Naive thymus-derived CD4-positive, alpha-beta T cell (primary cell): ENCODE measurements at regions of chr7 and their contacts with region 1.

Region 1: GRCh38 chr7:55593515-55594318 is 21.4 kb upstream of the VOPP1 start:
- DNase-seq: peak in 7 of 9 donors; percentile 40 to 79 (median 60)
- ATAC-seq: peak; percentile 60
- H3K4me3 ChIP-seq: no peak overlapping the region
- H3K4me3 Mint-ChIP-seq: no peak overlapping the region
- H3K27ac ChIP-seq: no peak overlapping the region
- H3K27ac Mint-ChIP-seq: no peak overlapping the region
- H3K4me1 ChIP-seq: peaks cover 0 to 4% of the 10 kb centered on the region in 2 donors
- H3K4me1 Mint-ChIP-seq: peaks cover 4 to 24% (median 11%) of the 10 kb centered on the region in 7 donors
- H3K27me3 ChIP-seq: no peaks in the 10 kb centered on the region
- H3K27me3 Mint-ChIP-seq: peaks cover 0 to 5% (median 2%) of the 10 kb centered on the region in 5 donors

Region 2: DNA sequence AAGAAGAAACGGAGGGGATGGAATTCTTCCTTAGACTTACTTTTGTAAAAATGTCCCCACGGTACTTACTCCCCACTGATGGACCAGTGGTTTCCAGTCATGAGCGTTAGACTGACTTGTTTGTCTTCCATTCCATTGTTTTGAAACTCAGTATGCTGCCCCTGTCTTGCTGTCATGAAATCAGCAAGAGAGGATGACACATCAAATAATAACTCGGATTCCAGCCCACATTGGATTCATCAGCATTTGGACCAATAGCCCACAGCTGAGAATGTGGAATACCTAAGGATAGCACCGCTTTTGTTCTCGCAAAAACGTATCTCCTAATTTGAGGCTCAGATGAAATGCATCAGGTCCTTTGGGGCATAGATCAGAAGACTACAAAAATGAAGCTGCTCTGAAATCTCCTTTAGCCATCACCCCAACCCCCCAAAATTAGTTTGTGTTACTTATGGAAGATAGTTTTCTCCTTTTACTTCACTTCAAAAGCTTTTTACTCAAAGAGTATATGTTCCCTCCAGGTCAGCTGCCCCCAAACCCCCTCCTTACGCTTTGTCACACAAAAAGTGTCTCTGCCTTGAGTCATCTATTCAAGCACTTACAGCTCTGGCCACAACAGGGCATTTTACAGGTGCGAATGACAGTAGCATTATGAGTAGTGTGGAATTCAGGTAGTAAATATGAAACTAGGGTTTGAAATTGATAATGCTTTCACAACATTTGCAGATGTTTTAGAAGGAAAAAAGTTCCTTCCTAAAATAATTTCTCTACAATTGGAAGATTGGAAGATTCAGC is 387.3 kb before region 1 on chr7:
- CTCF ChIA-PET with region 1: no interaction called
- POLR2A ChIA-PET with region 1: no interaction called
- intact Hi-C with region 1: no loop called
- DNase-seq: no peak
- ATAC-seq: no peak
- H3K4me3 ChIP-seq: no peak overlapping the region
- H3K4me3 Mint-ChIP-seq: no peak overlapping the region
- H3K27ac ChIP-seq: no peak overlapping the region
- H3K27ac Mint-ChIP-seq: no peak overlapping the region
- H3K4me1 ChIP-seq: no peaks in the 10 kb centered on the region
- H3K4me1 Mint-ChIP-seq: no peaks in the 10 kb centered on the region
- H3K27me3 ChIP-seq: no peaks in the 10 kb centered on the region
- H3K27me3 Mint-ChIP-seq: peaks cover 0 to 4% (median 0%) of the 10 kb centered on the region in 5 donors

Region 3: DNA sequence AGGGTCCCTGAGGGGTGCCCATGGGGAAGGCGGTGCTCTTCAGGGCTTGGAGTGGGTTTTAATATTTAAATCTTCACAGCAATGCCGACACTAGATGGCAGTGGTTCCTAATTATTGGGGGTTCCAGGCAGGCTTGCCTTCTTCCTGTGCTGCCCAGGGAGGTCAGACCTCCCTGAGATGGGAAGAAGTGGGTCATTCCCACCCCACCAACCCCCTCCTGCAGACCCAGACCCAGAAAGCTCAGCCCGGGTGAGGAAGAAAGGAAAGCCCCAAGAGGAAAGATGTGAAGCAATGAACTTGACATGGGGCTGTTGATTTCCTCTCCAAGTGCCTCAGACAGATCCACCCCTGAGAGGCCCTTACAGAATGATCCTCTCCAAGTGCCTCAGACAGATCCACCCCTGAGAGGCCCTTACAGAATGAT is 313.7 kb before region 1 on chr7:
- CTCF ChIA-PET with region 1: no interaction called
- POLR2A ChIA-PET with region 1: no interaction called
- intact Hi-C with region 1: loop called (anchors 1 kb)
- DNase-seq: peak in 8 of 9 donors; percentile 15 to 59 (median 44)
- ATAC-seq: peak; percentile 73
- H3K4me3 ChIP-seq: no peak overlapping the region
- H3K4me3 Mint-ChIP-seq: no peak overlapping the region
- H3K27ac ChIP-seq: no peak overlapping the region
- H3K27ac Mint-ChIP-seq: peak overlapping the region in 1 of 9 donors; percentile 52
- H3K4me1 ChIP-seq: no peaks in the 10 kb centered on the region
- H3K4me1 Mint-ChIP-seq: peaks cover 0 to 2% (median 0%) of the 10 kb centered on the region in 7 donors
- H3K27me3 ChIP-seq: no peaks in the 10 kb centered on the region
- H3K27me3 Mint-ChIP-seq: peaks cover 5 to 12% (median 8%) of the 10 kb centered on the region in 5 donors

Region 4: GRCh38 chr7:55432939-55433784 is 160.6 kb before region 1 on chr7:
- CTCF ChIA-PET with region 1: interaction called, 29 read pairs
- POLR2A ChIA-PET with region 1: interaction called, 5 read pairs
- intact Hi-C with region 1: loop called (anchors 1 kb)
- DNase-seq: peak in 5 of 9 donors; percentile 44 to 54 (median 48)
- ATAC-seq: peak; percentile 61
- H3K4me3 ChIP-seq: no peak overlapping the region
- H3K4me3 Mint-ChIP-seq: peak overlapping the region in 1 of 10 donors; percentile 19
- H3K27ac ChIP-seq: no peak overlapping the region
- H3K27ac Mint-ChIP-seq: peak overlapping the region in 5 of 9 donors; percentile 7 to 76 (median 67)
- H3K4me1 ChIP-seq: peaks cover 0 to 29% of the 10 kb centered on the region in 2 donors
- H3K4me1 Mint-ChIP-seq: peaks cover 17 to 46% (median 40%) of the 10 kb centered on the region in 7 donors
- H3K27me3 ChIP-seq: no peaks in the 10 kb centered on the region
- H3K27me3 Mint-ChIP-seq: no peaks in the 10 kb centered on the region

Region 5: DNA sequence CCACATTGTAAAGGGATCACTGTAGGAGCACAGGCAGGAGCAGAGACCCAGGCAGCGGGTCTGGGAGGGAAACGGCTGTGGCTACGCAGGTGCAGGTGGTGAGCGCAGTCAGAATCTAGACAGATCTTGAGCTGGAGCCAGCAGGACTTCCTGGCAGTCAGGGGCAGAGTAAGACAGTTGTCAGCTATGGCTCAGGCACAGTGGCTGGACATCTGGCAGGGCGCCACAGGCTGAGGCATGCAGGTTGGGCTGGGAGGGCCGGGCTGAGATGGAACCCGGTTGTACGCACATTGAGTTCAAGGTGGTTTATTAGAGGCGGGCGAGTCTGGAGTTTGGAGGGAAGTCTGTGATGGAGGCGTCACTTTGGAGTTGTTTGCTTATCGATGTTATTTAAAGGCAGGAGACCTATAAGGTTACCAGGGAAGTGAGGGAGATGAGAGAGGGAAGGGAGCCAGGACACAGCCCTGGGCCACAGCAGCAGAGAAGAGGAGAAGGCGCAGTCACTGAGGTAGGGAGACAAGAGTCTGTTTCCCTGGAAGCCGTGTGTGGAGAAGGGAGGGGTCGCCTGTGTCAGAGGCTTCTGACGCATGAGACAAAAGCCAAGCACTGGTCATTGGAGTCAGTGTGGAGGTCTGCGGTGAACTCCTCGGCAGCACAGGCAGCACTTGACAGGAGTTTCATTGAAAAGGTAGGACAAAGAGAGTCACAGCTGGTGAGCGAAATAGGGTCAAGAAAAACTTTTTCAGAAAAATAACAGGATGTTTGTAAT is 154.8 kb before region 1 on chr7:
- CTCF ChIA-PET with region 1: interaction called, 29 read pairs
- POLR2A ChIA-PET with region 1: interaction called, 5 read pairs
- intact Hi-C with region 1: loop called in 1 of 2 experiments (anchors 1 kb)
- DNase-seq: peak in 1 of 9 donors; percentile 19
- ATAC-seq: no peak
- H3K4me3 ChIP-seq: no peak overlapping the region
- H3K4me3 Mint-ChIP-seq: peak overlapping the region in 8 of 10 donors; percentile 11 to 71 (median 52)
- H3K27ac ChIP-seq: no peak overlapping the region
- H3K27ac Mint-ChIP-seq: peak overlapping the region; percentile 10 to 92 (median 45)
- H3K4me1 ChIP-seq: peaks cover 0 to 44% of the 10 kb centered on the region in 2 donors
- H3K4me1 Mint-ChIP-seq: peaks cover 30 to 59% (median 51%) of the 10 kb centered on the region in 7 donors
- H3K27me3 ChIP-seq: no peaks in the 10 kb centered on the region
- H3K27me3 Mint-ChIP-seq: no peaks in the 10 kb centered on the region

Region 6: GRCh38 chr7:55469271-55469681 is 124.4 kb before region 1 on chr7:
- CTCF ChIA-PET with region 1: interaction called, 5 read pairs
- POLR2A ChIA-PET with region 1: interaction called, 3 read pairs
- intact Hi-C with region 1: loop called in 1 of 2 experiments (anchors 2 kb)
- DNase-seq: peak in 7 of 9 donors; percentile 57 to 85 (median 76)
- ATAC-seq: peak; percentile 86
- H3K4me3 ChIP-seq: peak overlapping the region; percentile 21
- H3K4me3 Mint-ChIP-seq: peak overlapping the region; percentile 33 to 75 (median 68)
- H3K27ac ChIP-seq: peak overlapping the region; percentile 70
- H3K27ac Mint-ChIP-seq: peak overlapping the region; percentile 85 to 97 (median 93)
- H3K4me1 ChIP-seq: peaks cover 31 to 76% of the 10 kb centered on the region in 2 donors
- H3K4me1 Mint-ChIP-seq: peaks cover 25 to 86% (median 74%) of the 10 kb centered on the region in 7 donors
- H3K27me3 ChIP-seq: no peaks in the 10 kb centered on the region
- H3K27me3 Mint-ChIP-seq: no peaks in the 10 kb centered on the region

Region 7: GRCh38 chr7:55477781-55478374 is 115.8 kb before region 1 on chr7:
- CTCF ChIA-PET with region 1: no interaction called
- POLR2A ChIA-PET with region 1: no interaction called
- intact Hi-C with region 1: loop called in 1 of 2 experiments (anchors 1 kb)
- DNase-seq: no peak
- ATAC-seq: no peak
- H3K4me3 ChIP-seq: no peak overlapping the region
- H3K4me3 Mint-ChIP-seq: peak overlapping the region in 7 of 10 donors; percentile 0 to 79 (median 66)
- H3K27ac ChIP-seq: peak overlapping the region; percentile 61
- H3K27ac Mint-ChIP-seq: peak overlapping the region; percentile 35 to 95 (median 92)
- H3K4me1 ChIP-seq: peaks cover 37 to 64% of the 10 kb centered on the region in 2 donors
- H3K4me1 Mint-ChIP-seq: peaks cover 48 to 98% (median 86%) of the 10 kb centered on the region in 7 donors
- H3K27me3 ChIP-seq: no peaks in the 10 kb centered on the region
- H3K27me3 Mint-ChIP-seq: no peaks in the 10 kb centered on the region

Region 8: DNA sequence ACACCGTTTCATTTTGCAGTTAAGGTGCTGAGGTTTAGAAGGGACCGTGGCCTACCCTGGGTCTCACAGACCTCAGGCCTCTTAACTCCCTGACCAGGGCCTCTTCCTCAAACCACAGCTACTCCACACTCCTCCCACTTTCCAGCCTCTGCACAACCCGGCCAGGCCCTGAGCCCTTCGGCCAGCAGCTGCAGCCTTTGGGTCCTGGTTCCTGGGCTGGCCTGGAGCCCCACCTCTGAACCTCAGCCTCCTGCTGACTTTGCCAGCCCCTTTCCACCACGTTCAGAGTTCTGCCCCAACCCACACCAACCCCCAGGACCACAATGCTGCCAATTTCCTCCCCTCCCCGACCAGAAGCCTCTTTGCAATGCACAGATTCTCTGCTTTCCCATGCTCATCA is 105.5 kb before region 1 on chr7:
- CTCF ChIA-PET with region 1: no interaction called
- POLR2A ChIA-PET with region 1: no interaction called
- intact Hi-C with region 1: no loop called
- DNase-seq: no peak
- ATAC-seq: no peak
- H3K4me3 ChIP-seq: no peak overlapping the region
- H3K4me3 Mint-ChIP-seq: peak overlapping the region in 1 of 10 donors; percentile 45
- H3K27ac ChIP-seq: no peak overlapping the region
- H3K27ac Mint-ChIP-seq: peak overlapping the region; percentile 29 to 85 (median 74)
- H3K4me1 ChIP-seq: no peaks in the 10 kb centered on the region
- H3K4me1 Mint-ChIP-seq: peaks cover 49 to 82% (median 61%) of the 10 kb centered on the region in 7 donors
- H3K27me3 ChIP-seq: no peaks in the 10 kb centered on the region
- H3K27me3 Mint-ChIP-seq: no peaks in the 10 kb centered on the region

Region 9: DNA sequence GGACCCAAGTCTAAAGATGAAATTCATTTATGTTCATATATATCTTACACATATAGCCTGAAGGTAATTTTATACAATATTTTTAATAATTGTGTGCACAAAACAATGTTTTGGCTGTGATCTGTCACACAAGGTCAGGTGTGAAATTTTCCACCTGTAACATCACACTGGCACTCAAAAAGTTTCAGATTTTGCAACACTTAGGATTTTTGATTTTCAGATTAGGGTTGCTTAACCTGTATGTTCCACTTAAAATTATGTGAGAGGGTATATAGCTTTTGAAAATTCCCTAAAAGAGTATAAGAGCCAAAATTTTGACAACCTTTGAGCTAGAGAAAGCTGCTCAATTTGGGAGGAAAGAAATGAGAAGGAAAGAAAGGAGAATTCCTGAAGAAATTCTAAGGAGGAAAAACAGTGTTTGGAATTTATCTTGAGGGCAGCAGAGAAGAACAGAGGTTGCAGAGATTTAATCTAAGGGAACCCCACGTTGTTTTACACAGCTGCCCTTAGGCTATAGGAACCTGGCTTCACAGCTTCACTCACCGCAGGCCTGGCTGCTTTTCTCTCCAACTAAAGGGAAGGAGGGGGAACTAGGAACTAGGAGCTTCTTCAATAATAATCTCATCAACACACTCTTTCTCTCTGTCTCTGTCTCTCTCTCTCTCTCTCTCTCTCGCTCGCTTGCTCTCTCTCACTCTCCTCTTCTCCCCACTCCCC is 30.0 kb before region 1 on chr7:
- CTCF ChIA-PET with region 1: interaction called, 4 read pairs
- POLR2A ChIA-PET with region 1: interaction called, 3 read pairs
- intact Hi-C with region 1: loop called in 1 of 2 experiments (anchors 5 kb)
- DNase-seq: no peak
- ATAC-seq: no peak
- H3K4me3 ChIP-seq: no peak overlapping the region
- H3K4me3 Mint-ChIP-seq: peak overlapping the region in 1 of 10 donors; percentile 7
- H3K27ac ChIP-seq: no peak overlapping the region
- H3K27ac Mint-ChIP-seq: peak overlapping the region in 6 of 9 donors; percentile 49 to 76 (median 71)
- H3K4me1 ChIP-seq: peaks cover 44 to 51% of the 10 kb centered on the region in 2 donors
- H3K4me1 Mint-ChIP-seq: peaks cover 61 to 97% (median 84%) of the 10 kb centered on the region in 7 donors
- H3K27me3 ChIP-seq: no peaks in the 10 kb centered on the region
- H3K27me3 Mint-ChIP-seq: no peaks in the 10 kb centered on the region

Region 10: DNA sequence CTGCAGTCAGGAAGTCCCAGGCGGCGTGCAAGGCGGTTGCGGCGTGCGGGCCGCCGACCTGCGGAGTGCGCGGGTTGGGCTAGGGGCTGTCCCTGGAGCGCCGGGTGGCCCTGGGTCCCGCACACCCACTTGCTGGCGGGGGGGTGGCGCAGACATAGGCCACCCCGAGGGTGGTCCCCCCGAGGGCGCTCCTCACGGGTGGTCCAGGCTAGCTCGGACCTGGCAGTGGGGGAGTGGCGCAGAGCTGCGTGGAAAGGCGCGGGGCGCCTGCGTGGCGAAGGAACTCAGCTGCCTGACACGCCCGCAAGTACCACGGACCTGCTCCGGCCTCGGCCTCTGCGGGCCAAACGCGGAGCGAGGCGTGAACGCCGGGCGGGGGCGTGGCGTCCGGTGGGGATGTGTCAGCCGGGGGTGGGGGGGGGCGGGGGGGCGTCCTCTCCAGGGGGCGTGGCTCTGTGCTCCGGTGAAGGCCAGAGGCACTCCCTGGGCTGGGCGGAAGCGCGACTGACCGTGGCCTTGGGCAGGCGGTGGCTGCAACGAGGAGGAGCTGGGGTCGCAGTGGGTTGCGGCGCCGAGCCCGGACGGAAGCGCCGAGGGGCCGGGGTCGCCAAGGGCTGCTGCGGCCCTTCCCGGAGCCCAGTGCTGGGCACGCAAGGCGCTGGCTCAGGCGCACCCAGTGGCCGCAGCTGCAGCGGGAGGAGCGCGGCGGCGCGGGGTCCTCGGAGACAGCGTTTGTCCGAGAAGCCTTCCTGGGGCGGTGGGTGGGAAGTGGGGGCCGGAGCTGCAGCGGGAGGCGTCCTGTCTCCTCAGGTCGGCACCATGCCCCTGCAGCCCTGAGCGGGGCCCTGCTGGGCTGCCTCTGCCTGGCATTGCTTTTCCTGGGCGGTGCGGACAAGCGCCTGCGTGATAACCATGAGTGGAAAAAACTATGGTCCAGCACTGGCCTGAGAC is 581.4 kb after region 1 on chr7:
- CTCF ChIA-PET with region 1: no interaction called
- POLR2A ChIA-PET with region 1: no interaction called
- intact Hi-C with region 1: no loop called
- DNase-seq: no peak
- ATAC-seq: no peak
- H3K4me3 ChIP-seq: no peak overlapping the region
- H3K4me3 Mint-ChIP-seq: peak overlapping the region in 2 of 10 donors; percentile 9 to 28
- H3K27ac ChIP-seq: no peak overlapping the region
- H3K27ac Mint-ChIP-seq: no peak overlapping the region
- H3K4me1 ChIP-seq: no peaks in the 10 kb centered on the region
- H3K4me1 Mint-ChIP-seq: peaks cover 0 to 10% (median 0%) of the 10 kb centered on the region in 7 donors
- H3K27me3 ChIP-seq: no peaks in the 10 kb centered on the region
- H3K27me3 Mint-ChIP-seq: peaks cover 0 to 40% (median 28%) of the 10 kb centered on the region in 5 donors

Region 11: GRCh38 chr7:56483861-56484550 is 890.3 kb after region 1 on chr7:
- CTCF ChIA-PET with region 1: no interaction called
- POLR2A ChIA-PET with region 1: no interaction called
- intact Hi-C with region 1: no loop called
- DNase-seq: no peak
- ATAC-seq: no peak
- H3K4me3 ChIP-seq: no peak overlapping the region
- H3K4me3 Mint-ChIP-seq: no peak overlapping the region
- H3K27ac ChIP-seq: no peak overlapping the region
- H3K27ac Mint-ChIP-seq: no peak overlapping the region
- H3K4me1 ChIP-seq: no peaks in the 10 kb centered on the region
- H3K4me1 Mint-ChIP-seq: peaks cover 0 to 2% (median 0%) of the 10 kb centered on the region in 7 donors
- H3K27me3 ChIP-seq: no peaks in the 10 kb centered on the region
- H3K27me3 Mint-ChIP-seq: no peaks in the 10 kb centered on the region